ENCODE measurements at regions of chr3 and their contacts with region 1.

Region 1: GRCh38 chr3:168165390-168166269 is 69.9 kb upstream of the GOLIM4 start:
- DNase-seq: peak; percentile 56 to 83 (median 65)
- H3K4me3 ChIP-seq: no peak overlapping the region
- H3K27ac ChIP-seq: no peak overlapping the region
- H3K4me1 ChIP-seq: no peaks in the 10 kb centered on the region
- H3K27me3 ChIP-seq: no peaks in the 10 kb centered on the region
- CTCF ChIP-seq: peak; percentile 74 to 94 (median 82)
- POLR2A ChIP-seq: no peak

Region 2: GRCh38 chr3:167609156-167609555 is 556.5 kb before region 1 on chr3:
- intact Hi-C with region 1: no loop called
- DNase-seq: no peak
- H3K4me3 ChIP-seq: no peak overlapping the region
- H3K27ac ChIP-seq: no peak overlapping the region
- H3K4me1 ChIP-seq: no peaks in the 10 kb centered on the region
- H3K27me3 ChIP-seq: no peaks in the 10 kb centered on the region
- CTCF ChIP-seq: no peak
- POLR2A ChIP-seq: no peak

Region 3: GRCh38 chr3:168047190-168047795 is 118.3 kb before region 1 on chr3:
- intact Hi-C with region 1: loop called (anchors 2 to 5 kb)
- DNase-seq: peak in 2 of 7 donors; percentile 17 to 21
- H3K4me3 ChIP-seq: no peak overlapping the region
- H3K27ac ChIP-seq: no peak overlapping the region
- H3K4me1 ChIP-seq: peaks cover 0 to 17% of the 10 kb centered on the region in 2 donors
- H3K27me3 ChIP-seq: no peaks in the 10 kb centered on the region
- CTCF ChIP-seq: peak; percentile 68 to 98 (median 90)
- POLR2A ChIP-seq: no peak

Region 4: GRCh38 chr3:168061332-168061996 is 104.2 kb before region 1 on chr3:
- intact Hi-C with region 1: loop called in 1 of 2 experiments (anchors 5 kb)
- DNase-seq: no peak
- H3K4me3 ChIP-seq: no peak overlapping the region
- H3K27ac ChIP-seq: no peak overlapping the region
- H3K4me1 ChIP-seq: peaks cover 0 to 20% of the 10 kb centered on the region in 2 donors
- H3K27me3 ChIP-seq: no peaks in the 10 kb centered on the region
- CTCF ChIP-seq: no peak
- POLR2A ChIP-seq: no peak

Region 5: GRCh38 chr3:168671082-168671481 is 505.5 kb after region 1 on chr3:
- intact Hi-C with region 1: no loop called
- DNase-seq: no peak
- H3K4me3 ChIP-seq: no peak overlapping the region
- H3K27ac ChIP-seq: no peak overlapping the region
- H3K4me1 ChIP-seq: no peaks in the 10 kb centered on the region
- H3K27me3 ChIP-seq: no peaks in the 10 kb centered on the region
- CTCF ChIP-seq: no peak
- POLR2A ChIP-seq: no peak

Measured in adrenal gland (tissue), 19 donors.